HEK293T (cell line): ENCODE measurements at regions of chr7 and their contacts with region 1.

Region 1: GRCh38 chr7:29105752-29106668 is 40.3 kb downstream of the CPVL start:
- DNase-seq: peak; percentile 37

Region 2: DNA sequence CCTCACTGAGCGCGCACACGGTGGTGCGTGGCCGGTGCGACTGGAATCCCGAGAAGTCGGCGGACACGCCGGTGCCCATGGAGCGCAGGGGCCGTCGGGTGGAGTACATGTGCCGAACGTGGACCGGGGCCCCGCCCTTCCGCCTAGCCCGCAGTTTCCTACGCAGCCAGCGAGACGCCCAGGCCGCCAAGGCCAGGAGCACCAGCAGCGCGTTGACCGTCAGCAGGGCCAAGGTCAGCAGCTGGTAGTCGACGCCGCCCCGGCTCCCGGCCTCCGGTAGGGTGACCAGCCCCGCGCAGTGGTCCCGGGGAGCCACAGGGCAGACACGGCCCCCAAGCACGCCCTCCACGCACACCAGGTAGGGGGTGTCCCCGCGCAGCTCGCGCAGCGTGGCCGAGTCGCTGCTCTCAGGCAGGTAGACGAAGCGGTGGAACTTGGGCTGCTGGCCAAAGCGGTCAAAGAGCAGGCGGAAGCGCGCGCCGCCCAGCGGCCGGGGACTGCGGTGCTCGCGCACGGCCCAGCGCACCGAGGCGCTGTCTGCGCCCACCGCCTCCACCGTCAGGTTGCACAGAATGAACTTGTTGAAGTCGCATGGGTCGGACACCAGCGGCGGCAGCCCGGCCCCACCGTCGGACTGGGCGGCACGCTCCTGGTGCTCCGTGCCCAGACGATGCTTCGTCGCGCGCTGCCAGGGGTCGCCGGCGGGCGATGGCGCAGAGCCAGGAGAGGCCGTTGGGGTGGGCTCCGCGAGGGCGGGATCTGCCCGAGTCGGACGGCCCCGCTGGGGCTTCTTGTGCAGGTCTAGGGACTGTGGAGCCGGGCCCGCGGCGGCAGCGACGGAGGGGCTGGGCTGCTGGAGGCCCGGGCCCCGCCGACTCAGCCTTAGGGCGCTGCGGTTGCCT is 150.0 kb before region 1 on chr7:
- CTCF ChIA-PET with region 1: interaction called, 12 read pairs
- POLR2A ChIA-PET with region 1: no interaction called
- DNase-seq: peak; percentile 89

Region 3: DNA sequence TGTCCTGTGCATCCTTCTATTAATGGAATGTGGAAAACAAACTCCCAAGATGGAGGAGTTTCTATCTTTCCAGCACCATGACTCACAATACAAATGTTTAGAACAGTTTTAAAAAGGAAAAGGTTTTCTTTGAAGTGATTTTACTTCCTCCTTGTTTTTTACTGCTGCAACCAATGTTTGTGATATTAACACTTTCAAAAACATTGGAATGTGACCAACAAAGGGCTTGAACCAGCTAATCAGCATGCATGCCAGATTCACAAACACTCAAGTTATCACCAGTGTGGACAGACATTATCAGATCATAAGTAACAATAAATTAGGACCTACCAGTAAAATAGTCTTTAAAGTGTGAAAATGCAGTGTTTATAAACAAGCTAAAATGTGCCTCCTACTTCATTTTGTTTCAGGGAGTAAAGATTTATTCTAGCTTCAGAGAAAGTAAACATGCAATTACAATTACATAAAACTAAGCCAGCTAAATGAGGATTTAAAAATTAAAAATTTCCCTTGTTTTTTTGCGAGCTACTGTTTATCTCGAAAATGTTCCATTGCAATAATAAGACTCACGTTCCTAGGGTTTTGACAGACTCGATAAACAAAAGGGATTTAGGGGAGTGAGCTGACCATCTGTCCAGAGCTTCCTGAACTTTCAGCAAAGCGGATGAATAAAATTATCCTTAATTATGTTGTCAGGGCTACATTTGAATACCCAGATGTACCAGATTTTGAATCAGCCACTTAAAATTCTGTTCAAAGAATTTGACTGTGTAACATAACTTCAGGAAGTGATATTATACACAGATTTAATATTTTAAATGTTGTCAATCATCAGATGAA is 10.6 kb after region 1 on chr7:
- CTCF ChIA-PET with region 1: interaction called, 16 read pairs
- POLR2A ChIA-PET with region 1: no interaction called
- DNase-seq: no peak